Activated CD4-positive, alpha-beta T cell treated with anti-CD3 and anti-CD28 coated beads for 36 hours (primary cell): ENCODE measurements at regions of chr2 and their contacts with region 1.

Region 1: GRCh38 chr2:149597668-149598326 is 10.2 kb upstream of the MMADHC start:
- DNase-seq: peak; percentile 57
- ATAC-seq: peak; percentile 100
- H3K4me3 Mint-ChIP-seq: no peak overlapping the region
- H3K27ac Mint-ChIP-seq: peak overlapping the region; percentile 0
- H3K4me1 Mint-ChIP-seq: peaks cover 22% of the 10 kb centered on the region
- H3K27me3 Mint-ChIP-seq: no peaks in the 10 kb centered on the region

Region 2: GRCh38 chr2:149507974-149508373 is 89.8 kb before region 1 on chr2:
- CTCF ChIA-PET with region 1: no interaction called
- POLR2A ChIA-PET with region 1: no interaction called
- intact Hi-C with region 1: no loop called
- DNase-seq: no peak
- ATAC-seq: no peak
- H3K4me3 Mint-ChIP-seq: no peak overlapping the region
- H3K27ac Mint-ChIP-seq: no peak overlapping the region
- H3K4me1 Mint-ChIP-seq: no peaks in the 10 kb centered on the region
- H3K27me3 Mint-ChIP-seq: peaks cover 19% of the 10 kb centered on the region

Region 3: DNA sequence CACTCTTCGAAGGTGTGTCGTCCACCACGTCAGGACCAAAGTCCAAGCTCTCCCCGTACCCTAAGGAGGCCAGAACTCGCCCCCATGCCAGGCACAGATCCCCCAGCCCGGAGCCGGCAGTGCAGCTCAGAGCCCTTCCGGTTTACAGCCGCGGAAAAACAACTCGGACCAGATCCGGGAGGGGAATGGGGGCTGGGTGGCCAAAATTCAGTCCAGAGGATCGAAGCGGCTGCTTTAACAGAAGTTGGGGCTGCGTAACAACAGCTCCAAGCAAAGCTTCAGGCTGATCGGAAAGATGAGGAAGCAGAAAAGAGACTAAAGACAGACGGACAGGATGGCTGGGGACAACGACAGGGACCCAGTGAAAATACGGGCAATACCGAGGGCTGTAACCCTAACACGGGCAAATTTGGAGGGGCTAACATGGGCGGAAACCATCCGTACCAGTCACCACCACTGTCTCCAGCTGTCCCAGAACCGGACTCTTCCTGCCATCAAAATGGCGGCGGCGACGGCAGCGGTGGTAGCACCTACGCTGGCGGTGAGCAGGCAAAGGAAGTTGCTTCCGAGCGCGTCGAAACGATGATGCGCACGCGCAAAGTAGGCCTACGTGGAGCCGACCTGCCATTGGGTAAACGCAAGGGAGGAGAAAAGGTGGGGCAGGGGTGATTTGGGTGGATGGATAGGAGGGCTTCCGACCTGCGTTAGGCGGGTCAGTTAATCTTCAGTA is 10.4 kb before region 1 on chr2 and contains the start of gene MMADHC:
- CTCF ChIA-PET with region 1: interaction called, 17 read pairs
- POLR2A ChIA-PET with region 1: no interaction called
- intact Hi-C with region 1: no loop called
- DNase-seq: peak; percentile 96
- ATAC-seq: peak; percentile 99
- H3K4me3 Mint-ChIP-seq: peak within 1 kb of the TSS; percentile 92
- H3K27ac Mint-ChIP-seq: peak within 1 kb of the TSS; percentile 99
- H3K4me1 Mint-ChIP-seq: peaks cover 41% of the 10 kb centered on the region
- H3K27me3 Mint-ChIP-seq: peaks cover 12% of the 10 kb centered on the region
- total RNA-seq, gene MMADHC: 94.7 to 136 TPM

Region 4: GRCh38 chr2:149709496-149710263 is 111.9 kb after region 1 on chr2:
- CTCF ChIA-PET with region 1: no interaction called
- POLR2A ChIA-PET with region 1: no interaction called
- intact Hi-C with region 1: loop called in 1 of 2 experiments (anchors 5 kb)
- DNase-seq: no peak
- ATAC-seq: no peak
- H3K4me3 Mint-ChIP-seq: no peak overlapping the region
- H3K27ac Mint-ChIP-seq: no peak overlapping the region
- H3K4me1 Mint-ChIP-seq: no peaks in the 10 kb centered on the region
- H3K27me3 Mint-ChIP-seq: peaks cover 2% of the 10 kb centered on the region

Region 5: DNA sequence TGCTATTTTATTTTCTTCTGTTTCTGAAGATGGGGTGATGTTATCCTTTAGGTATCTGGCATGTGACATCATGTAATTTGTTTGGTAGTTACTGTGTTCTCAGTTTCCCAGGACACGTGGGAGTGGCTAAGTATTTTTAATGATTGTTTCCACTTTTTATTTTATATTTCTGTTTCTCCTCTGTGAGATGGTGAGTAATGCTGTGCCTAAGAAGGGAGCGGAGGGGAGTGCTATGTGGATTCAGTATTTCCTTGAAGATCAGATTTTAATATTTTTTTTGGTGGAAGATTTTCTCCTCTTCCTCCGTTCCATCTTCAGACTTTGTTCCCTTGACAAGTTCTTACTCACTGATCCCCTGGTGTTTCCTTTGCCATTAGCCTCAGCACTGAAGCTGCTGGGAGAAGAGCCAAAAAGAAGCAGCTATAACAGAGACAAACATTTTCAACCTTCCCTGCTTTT is 169.7 kb after region 1 on chr2:
- CTCF ChIA-PET with region 1: no interaction called
- POLR2A ChIA-PET with region 1: no interaction called
- intact Hi-C with region 1: loop called in 1 of 2 experiments (anchors 5 kb)
- DNase-seq: no peak
- ATAC-seq: no peak
- H3K4me3 Mint-ChIP-seq: no peak overlapping the region
- H3K27ac Mint-ChIP-seq: no peak overlapping the region
- H3K4me1 Mint-ChIP-seq: no peaks in the 10 kb centered on the region
- H3K27me3 Mint-ChIP-seq: no peaks in the 10 kb centered on the region

Region 6: GRCh38 chr2:150610671-150611279 is 1013.0 kb after region 1 on chr2:
- CTCF ChIA-PET with region 1: interaction called, 3 read pairs
- POLR2A ChIA-PET with region 1: no interaction called
- intact Hi-C with region 1: loop called (anchors 2 kb)
- DNase-seq: peak; percentile 8
- ATAC-seq: no peak
- H3K4me3 Mint-ChIP-seq: no peak overlapping the region
- H3K27ac Mint-ChIP-seq: no peak overlapping the region
- H3K4me1 Mint-ChIP-seq: no peaks in the 10 kb centered on the region
- H3K27me3 Mint-ChIP-seq: peaks cover 4% of the 10 kb centered on the region

Region 7: GRCh38 chr2:151238527-151239487 is 1641.0 kb after region 1 on chr2:
- CTCF ChIA-PET with region 1: interaction called, 20 read pairs
- POLR2A ChIA-PET with region 1: no interaction called
- intact Hi-C with region 1: loop called (anchors 1 kb)
- DNase-seq: peak; percentile 58
- ATAC-seq: peak; percentile 74
- H3K4me3 Mint-ChIP-seq: no peak overlapping the region
- H3K27ac Mint-ChIP-seq: no peak overlapping the region
- H3K4me1 Mint-ChIP-seq: peaks cover 5% of the 10 kb centered on the region
- H3K27me3 Mint-ChIP-seq: no peaks in the 10 kb centered on the region